H1 (cell line): ENCODE measurements at regions of chr1 and their contacts with region 1.

Region 1: GRCh38 chr1:41461790-41462611 is 22.5 kb downstream of the EDN2 start:
- DNase-seq: no peak
- H3K4me3 ChIP-seq: no peak overlapping the region
- H3K27ac ChIP-seq: no peak overlapping the region
- H3K4me1 ChIP-seq: no peaks in the 10 kb centered on the region
- H3K27me3 ChIP-seq: no peaks in the 10 kb centered on the region
- CTCF ChIP-seq: no peak
- EP300 ChIP-seq: no peak
- POLR2A ChIP-seq: no peak
- RAD21 ChIP-seq: no peak

Region 2: DNA sequence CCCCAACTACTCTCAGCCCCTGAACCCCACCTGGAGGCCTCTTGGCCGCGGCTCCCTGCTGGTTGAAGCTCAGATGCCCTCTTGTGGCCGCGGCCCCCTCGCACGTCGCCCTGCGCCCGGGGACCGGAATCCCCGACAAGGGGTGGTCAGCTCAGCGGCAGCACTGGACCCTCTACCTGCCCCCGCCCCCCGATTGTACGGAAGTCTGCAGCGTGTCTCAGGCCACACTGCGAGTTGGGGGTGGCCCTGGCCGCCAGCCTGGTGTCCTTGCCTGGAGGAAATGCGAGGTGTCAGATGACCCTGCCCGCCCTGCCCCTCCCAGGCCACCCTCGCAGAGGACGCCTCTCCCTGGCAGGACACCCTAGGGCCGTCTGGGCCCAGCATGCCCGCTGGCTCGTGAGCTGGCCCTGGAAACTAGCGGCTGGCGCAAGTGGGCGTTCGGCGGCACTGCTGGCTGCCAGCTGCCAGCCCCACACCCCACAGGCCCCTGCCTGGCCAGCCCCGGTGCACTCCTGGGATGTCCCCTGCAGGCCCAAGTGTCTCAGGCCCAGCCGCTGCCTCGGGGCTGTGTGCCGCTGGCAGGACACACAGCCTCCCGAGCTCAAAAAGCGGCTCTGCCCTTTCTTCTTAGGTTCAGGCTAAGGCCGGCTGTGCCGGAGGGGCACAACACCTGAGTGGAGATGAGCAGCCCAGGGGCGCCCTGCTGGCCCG is 38.3 kb before region 1 on chr1:
- CTCF ChIA-PET with region 1: no interaction called
- POLR2A ChIA-PET with region 1: no interaction called
- DNase-seq: peak in 1 of 2 experiments; percentile 79
- H3K4me3 ChIP-seq: no peak overlapping the region
- H3K27ac ChIP-seq: no peak overlapping the region
- H3K4me1 ChIP-seq: peaks cover 0 to 7% (median 2%) of the 10 kb centered on the region in 4 experiments; a peak in 4 of 7 replicates
- H3K27me3 ChIP-seq: no peaks in the 10 kb centered on the region
- CTCF ChIP-seq: peak; percentile 62 to 89 (median 65)
- EP300 ChIP-seq: no peak
- POLR2A ChIP-seq: no peak
- RAD21 ChIP-seq: peak; percentile 58 to 72

Region 3: DNA sequence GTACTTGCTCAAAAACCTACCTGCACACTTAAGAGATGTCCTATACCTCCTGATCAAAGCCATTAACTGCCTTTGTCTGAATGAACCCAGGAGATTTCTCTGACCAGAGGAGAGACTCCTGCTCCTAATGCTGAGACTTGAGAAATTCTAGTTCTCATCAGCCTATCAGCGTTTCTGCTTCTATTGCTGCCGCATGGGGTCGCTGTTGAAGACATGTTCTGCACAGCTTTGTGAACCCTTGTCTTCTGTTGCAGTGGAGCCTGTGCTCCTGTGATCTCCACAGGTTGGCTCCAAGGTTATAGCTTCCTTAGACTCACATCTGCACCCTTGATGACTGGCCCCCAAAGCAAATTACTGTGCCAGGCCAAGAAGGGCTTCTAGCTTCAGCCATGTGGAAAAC is 17.8 kb before region 1 on chr1:
- CTCF ChIA-PET with region 1: interaction called, 12 read pairs
- POLR2A ChIA-PET with region 1: no interaction called
- DNase-seq: no peak
- H3K4me3 ChIP-seq: no peak overlapping the region
- H3K27ac ChIP-seq: no peak overlapping the region
- H3K4me1 ChIP-seq: no peaks in the 10 kb centered on the region; a peak in 2 of 7 replicates
- H3K27me3 ChIP-seq: no peaks in the 10 kb centered on the region
- CTCF ChIP-seq: peak; percentile 26 to 63 (median 48)
- EP300 ChIP-seq: no peak
- POLR2A ChIP-seq: no peak
- RAD21 ChIP-seq: peak in 1 of 2 experiments; percentile 44; a peak in 2 of 4 replicates

Region 4: DNA sequence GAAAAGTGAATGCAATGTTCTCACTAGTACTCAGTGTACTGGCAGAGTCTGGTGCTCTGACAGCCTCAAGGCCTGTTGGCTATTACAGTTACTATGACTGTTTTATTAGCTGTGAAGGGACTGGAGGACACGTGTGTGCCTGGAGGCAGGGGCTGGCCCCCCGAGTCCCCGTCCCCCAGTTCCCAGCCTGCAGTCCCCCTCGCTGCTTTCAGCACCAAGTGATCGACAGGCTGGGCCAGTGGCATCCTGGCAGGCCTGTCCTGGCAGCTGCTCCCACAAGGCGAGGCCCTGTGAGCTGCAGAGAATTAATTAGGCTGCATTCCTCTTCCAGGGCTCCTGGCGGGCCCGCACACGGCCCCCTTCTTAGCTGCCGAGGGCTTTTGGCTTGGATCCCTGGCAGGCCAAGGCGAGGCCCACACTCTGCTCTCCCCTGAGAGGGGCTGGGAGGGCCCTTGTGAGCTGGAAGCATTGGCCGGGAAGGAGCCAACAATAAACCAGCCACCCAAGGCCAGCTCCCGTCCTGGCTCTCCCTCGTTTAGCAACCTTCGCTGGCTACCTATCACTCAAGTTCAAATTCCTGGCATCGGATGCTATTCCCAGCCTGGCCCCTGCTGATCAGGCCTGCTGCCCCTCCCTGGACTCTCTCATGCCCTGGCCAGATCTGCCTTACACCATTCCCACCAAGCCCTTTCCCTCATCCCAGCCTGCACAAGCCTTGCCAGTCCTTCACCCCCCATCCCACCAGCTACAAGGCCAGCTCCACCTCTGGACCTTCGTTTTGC is 12.7 kb after region 1 on chr1:
- CTCF ChIA-PET with region 1: interaction called, 21 read pairs
- POLR2A ChIA-PET with region 1: no interaction called
- DNase-seq: no peak
- H3K4me3 ChIP-seq: no peak overlapping the region
- H3K27ac ChIP-seq: no peak overlapping the region
- H3K4me1 ChIP-seq: peaks cover 0 to 5% (median 4%) of the 10 kb centered on the region in 4 experiments; a peak in 2 of 7 replicates
- H3K27me3 ChIP-seq: no peaks in the 10 kb centered on the region
- CTCF ChIP-seq: no peak
- EP300 ChIP-seq: no peak
- POLR2A ChIP-seq: no peak
- RAD21 ChIP-seq: no peak

Region 5: DNA sequence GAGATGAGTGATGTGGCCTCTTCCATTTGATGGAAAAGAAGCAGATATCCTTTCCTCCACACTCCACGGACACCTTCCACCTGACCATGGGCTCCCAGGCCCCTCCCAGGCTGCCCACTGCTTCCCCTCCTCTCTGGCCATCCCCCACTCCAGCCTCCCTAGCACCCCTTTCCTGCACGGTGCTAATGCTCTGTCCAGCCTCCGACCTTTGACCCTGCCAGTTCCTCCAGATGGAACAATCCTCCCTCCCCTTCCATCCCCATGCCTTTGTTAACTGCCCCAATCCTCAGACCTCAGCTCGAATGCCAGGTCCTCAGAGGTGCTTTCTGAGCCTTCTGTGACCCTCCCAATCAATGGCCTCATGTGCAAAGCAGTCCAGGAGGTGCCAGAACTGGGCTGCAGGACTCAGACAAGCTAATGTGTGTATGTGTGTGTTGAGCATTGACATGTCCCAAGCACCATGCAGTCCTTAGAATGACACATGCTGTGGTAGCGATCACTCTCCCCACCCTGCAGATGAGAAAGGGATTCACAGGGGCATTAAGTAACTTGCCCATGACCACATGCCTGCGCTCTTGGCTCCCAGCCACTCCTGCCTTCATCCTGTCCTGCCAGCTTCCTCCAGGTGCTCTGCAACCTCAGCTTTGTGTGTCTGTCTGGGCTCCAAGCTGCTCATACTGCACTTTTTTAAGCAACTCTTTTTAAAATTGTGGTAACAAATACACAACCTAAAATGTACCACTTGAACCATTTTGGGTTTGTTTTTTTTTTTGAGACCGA is 86.0 kb after region 1 on chr1:
- CTCF ChIA-PET with region 1: no interaction called
- POLR2A ChIA-PET with region 1: no interaction called
- DNase-seq: no peak
- H3K4me3 ChIP-seq: no peak overlapping the region
- H3K27ac ChIP-seq: no peak overlapping the region
- H3K4me1 ChIP-seq: no peaks in the 10 kb centered on the region
- H3K27me3 ChIP-seq: no peaks in the 10 kb centered on the region
- CTCF ChIP-seq: no peak
- EP300 ChIP-seq: no peak
- POLR2A ChIP-seq: no peak
- RAD21 ChIP-seq: no peak

Region 6: GRCh38 chr1:41568204-41568603 is 106.2 kb after region 1 on chr1:
- CTCF ChIA-PET with region 1: no interaction called
- POLR2A ChIA-PET with region 1: no interaction called
- DNase-seq: no peak
- H3K4me3 ChIP-seq: no peak overlapping the region
- H3K27ac ChIP-seq: no peak overlapping the region
- H3K4me1 ChIP-seq: no peaks in the 10 kb centered on the region
- H3K27me3 ChIP-seq: no peaks in the 10 kb centered on the region; a peak in 3 of 7 replicates
- CTCF ChIP-seq: no peak
- EP300 ChIP-seq: no peak
- POLR2A ChIP-seq: no peak
- RAD21 ChIP-seq: no peak